Panc1 (cell line): ENCODE measurements at regions of chr1 and their contacts with region 1.

Region 1: DNA sequence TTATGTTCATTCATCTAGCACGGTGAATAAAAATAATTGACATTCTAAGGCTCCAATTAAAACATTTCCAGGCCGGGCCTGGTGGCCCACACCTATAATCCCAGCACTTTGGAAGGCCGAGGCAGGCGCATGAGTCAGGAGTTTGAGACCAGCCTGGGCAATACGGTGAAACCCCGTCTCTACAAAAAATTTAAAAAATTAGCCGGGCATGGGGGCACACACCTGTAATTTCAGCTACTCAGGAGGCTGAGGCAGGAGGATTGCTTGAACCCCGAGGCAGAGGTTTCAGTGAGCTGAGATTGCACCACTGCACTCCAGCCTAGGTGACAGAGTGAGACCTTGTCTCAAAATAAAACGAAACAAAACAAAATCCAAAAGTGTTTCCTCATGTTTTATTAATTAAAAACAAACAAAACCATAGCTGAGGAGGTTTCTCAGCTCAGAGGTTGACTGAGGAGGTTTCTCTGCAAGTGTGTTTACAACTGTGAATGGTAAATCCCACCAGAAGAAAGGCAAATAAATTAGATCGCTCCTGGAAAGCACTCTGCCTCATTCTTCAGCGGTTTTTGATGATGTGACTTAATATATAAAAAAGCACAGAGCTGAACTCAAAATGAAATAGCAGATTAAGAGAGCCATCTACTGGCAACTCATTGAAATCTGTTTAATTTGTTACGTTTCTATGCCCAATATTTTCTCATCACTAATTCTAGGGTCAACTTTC is 37.7 kb upstream of the ATG4C start:
- DNase-seq: peak; percentile 51
- ATAC-seq: peak; percentile 65; the same call in 1 of the 2 replicates
- H3K4me3 ChIP-seq: peak overlapping the region in 1 of 2 experiments; percentile 3; a peak in 1 of 4 replicates
- H3K27ac ChIP-seq: no peak overlapping the region
- H3K4me1 ChIP-seq: no peaks in the 10 kb centered on the region
- H3K27me3 ChIP-seq: no peaks in the 10 kb centered on the region; the same call in 1 of the 2 replicates
- CTCF ChIP-seq: peak; percentile 65; the same call in 1 of the 2 replicates

Region 2: GRCh38 chr1:62508187-62508758 is 238.0 kb before region 1 on chr1:
- CTCF ChIA-PET with region 1: interaction called, 7 read pairs
- POLR2A ChIA-PET with region 1: no interaction called
- in situ Hi-C with region 1: no loop called
- intact Hi-C with region 1: loop called (anchors 2 kb)
- DNase-seq: peak; percentile 18
- ATAC-seq: no peak
- H3K4me3 ChIP-seq: no peak overlapping the region
- H3K27ac ChIP-seq: no peak overlapping the region
- H3K4me1 ChIP-seq: no peaks in the 10 kb centered on the region
- H3K27me3 ChIP-seq: no peaks in the 10 kb centered on the region
- CTCF ChIP-seq: peak; percentile 69; the same call in 1 of the 2 replicates

Region 3: DNA sequence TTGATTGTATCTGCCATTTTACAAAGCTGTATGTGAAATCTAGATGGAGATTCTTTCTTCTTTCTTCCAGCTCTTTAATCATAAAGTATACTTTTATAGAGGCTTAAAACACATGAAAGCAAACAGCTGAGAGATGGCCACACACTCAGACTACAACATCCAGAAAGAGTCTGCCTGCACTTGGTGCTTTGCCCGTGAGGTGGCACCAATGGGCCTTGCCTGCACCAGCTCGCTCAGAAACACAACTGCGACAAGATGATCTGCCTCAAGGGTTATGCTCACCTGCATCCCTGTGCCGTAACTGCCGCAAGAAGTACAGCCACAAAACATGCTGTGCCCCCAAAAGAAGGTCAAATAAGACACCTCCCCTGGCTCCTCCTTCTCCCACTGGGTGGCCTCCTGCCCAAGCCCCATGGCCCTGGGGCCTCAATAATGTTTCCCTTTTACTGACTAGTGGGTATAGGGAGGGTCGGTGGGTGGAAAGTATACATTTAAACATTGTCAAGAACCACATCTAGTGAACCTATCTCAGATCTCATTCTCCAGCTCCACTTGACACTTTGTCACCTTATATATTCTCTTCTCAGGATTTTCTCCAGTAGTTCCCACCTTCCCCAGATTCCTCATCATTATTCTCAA is 215.6 kb before region 1 on chr1:
- CTCF ChIA-PET with region 1: interaction called, 7 read pairs
- POLR2A ChIA-PET with region 1: no interaction called
- in situ Hi-C with region 1: no loop called
- intact Hi-C with region 1: loop called (anchors 1 kb)
- DNase-seq: no peak
- ATAC-seq: peak; percentile 96
- H3K4me3 ChIP-seq: no peak overlapping the region
- H3K27ac ChIP-seq: no peak overlapping the region
- H3K4me1 ChIP-seq: no peaks in the 10 kb centered on the region
- H3K27me3 ChIP-seq: no peaks in the 10 kb centered on the region
- CTCF ChIP-seq: peak; percentile 87

Region 4: DNA sequence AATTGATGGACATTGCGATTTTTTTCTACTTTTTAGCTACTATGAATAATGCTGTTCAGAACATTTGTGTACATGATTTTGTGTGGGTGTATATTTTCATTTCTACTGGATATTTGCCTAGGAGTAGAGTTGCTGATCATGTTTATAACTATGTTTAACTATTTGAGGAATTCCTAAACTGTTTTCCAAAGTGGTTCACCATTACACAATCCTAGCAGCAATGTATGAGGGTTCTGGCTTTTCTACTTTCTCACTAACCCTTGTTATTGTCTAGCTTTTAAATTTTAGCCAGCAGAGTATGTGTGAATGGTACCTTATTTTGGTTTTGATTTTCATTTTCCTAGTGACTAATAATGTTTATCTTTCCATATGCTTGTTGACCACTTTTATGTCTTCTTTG is 123.9 kb after region 1 on chr1:
- CTCF ChIA-PET with region 1: no interaction called
- POLR2A ChIA-PET with region 1: no interaction called
- in situ Hi-C with region 1: no loop called
- intact Hi-C with region 1: no loop called
- DNase-seq: no peak
- ATAC-seq: no peak
- H3K4me3 ChIP-seq: no peak overlapping the region
- H3K27ac ChIP-seq: no peak overlapping the region
- H3K4me1 ChIP-seq: no peaks in the 10 kb centered on the region
- H3K27me3 ChIP-seq: no peaks in the 10 kb centered on the region; the same call in 1 of the 2 replicates
- CTCF ChIP-seq: no peak